Gastrocnemius medialis (tissue), 4 donors: ENCODE measurements at regions of chr2 and their contacts with region 1.

Region 1: DNA sequence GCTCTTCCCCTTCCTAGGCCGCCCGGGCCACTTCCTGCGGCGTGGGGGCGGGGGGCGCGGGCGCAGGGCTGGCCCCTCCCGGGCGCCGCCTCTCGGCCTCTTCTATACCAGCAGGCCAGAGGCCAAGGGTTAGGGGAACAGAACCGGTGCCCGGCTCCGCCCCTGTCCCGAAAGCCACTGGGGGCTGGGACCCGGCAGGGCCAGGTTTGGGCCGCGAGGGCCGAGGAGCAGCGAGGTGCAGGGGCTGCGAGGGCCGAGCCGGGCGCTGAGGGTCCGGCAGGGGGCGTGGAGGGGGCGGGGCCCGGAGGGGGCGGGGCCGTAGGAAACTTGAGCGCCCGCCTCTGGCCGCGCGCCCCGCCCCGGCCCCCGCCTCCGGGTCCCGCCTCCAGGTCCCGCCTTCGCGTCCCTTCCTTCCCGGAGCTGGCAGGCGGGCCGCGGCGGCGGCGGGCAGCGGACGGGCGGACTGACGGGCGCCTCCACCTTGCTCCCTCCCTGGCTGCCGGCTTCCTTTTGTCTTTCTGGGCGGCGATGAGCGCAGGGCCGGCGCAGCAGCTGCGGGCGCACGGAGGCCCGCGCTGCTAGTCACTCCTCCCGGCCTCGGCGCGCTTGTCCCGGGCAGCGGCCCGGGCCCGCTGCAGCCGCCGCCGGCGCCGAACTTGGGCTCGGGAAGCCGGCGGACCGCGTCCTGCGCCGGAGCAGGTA is at the start of gene HPCAL1:
- DNase-seq: peak; percentile 63 to 73
- ATAC-seq: peak; percentile 83 to 86
- H3K4me3 ChIP-seq: peak within 1 kb of the TSS; percentile 63 to 86 (median 78)
- H3K27ac ChIP-seq: peak within 1 kb of the TSS; percentile 60 to 79 (median 75)
- H3K4me1 ChIP-seq: peaks cover 18 to 22% of the 10 kb centered on the region in 2 donors
- H3K27me3 ChIP-seq: no peaks in the 10 kb centered on the region
- CTCF ChIP-seq: peak in 4 of 5 experiments; percentile 33 to 64 (median 44)
- POLR2A ChIP-seq: peak; percentile 84 to 89
- total RNA-seq, gene HPCAL1: 29.0 to 45.5 (median 34.5) TPM

Region 2: DNA sequence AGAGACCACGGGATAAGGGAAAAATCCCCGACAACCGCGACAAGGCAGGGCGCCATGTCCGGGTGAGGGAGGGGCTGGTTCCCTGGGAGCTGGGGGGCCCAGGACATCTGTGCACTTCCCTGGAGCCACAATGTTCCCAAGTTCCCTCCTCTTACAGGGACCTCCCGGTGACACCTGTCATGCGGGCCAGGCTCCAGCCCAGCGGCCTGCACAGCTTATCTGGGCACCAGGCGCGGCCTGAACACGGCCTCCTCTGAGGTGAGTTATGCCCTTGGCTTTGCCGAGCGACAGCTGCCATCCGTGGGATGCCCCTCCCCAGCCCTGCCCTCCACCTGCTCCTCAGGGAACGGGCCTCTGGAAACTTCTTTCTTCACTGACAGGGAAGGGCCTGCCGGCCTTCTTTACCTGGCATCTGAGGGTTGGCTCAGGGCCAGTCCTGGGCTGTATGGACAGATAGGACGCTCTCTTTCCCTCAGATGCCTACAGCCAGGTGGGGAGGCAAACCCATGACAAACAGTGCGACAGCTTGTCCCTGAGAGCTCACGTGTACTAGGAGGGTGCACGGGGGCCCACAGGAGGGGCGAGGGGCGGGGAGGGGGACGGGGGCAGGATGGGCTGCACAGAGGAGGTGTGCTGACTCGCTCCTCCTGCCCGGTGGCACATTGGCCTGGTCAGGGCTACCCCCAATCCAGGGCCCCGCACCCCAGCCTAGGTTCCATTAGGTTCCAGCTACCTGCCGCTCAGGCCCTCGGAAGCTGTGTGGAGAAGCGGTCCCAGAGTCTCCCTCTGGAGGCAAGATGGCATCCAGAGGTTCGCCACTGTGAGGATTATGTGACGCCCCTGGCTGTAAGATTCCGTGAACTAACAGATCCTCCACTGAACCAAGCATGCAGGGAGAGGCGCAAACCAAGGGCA is 34.8 kb before region 1 on chr2:
- in situ Hi-C with region 1: no loop called
- intact Hi-C with region 1: loop called (anchors 1 kb)
- DNase-seq: peak; percentile 54 to 86
- ATAC-seq: peak; percentile 77 to 87
- H3K4me3 ChIP-seq: no peak overlapping the region
- H3K27ac ChIP-seq: peak overlapping the region in 2 of 4 donors; percentile 2 to 44
- H3K4me1 ChIP-seq: peaks cover 0 to 8% of the 10 kb centered on the region in 2 donors
- H3K27me3 ChIP-seq: no peaks in the 10 kb centered on the region
- CTCF ChIP-seq: no peak
- POLR2A ChIP-seq: no peak